ENCODE measurements at regions of chr14 and their contacts with region 1.

Region 1: GRCh38 chr14:25908277-25909044 is 689.4 kb downstream of the NOVA1 start:
- DNase-seq: no peak
- ATAC-seq: no peak
- H3K4me3 ChIP-seq: no peak overlapping the region
- H3K27ac ChIP-seq: no peak overlapping the region
- H3K4me1 ChIP-seq: no peaks in the 10 kb centered on the region
- H3K27me3 ChIP-seq: no peaks in the 10 kb centered on the region
- CTCF ChIP-seq: no peak

Region 2: GRCh38 chr14:25887251-25887878 is 21.1 kb before region 1 on chr14:
- intact Hi-C with region 1: loop called in 1 of 2 experiments (anchors 1 kb)
- DNase-seq: no peak
- ATAC-seq: no peak
- H3K4me3 ChIP-seq: no peak overlapping the region
- H3K27ac ChIP-seq: no peak overlapping the region
- H3K4me1 ChIP-seq: no peaks in the 10 kb centered on the region
- H3K27me3 ChIP-seq: no peaks in the 10 kb centered on the region
- CTCF ChIP-seq: no peak